Right cardiac atrium (tissue), 5 donors: ENCODE measurements at regions of chr11 and their contacts with region 1.

Region 1: DNA sequence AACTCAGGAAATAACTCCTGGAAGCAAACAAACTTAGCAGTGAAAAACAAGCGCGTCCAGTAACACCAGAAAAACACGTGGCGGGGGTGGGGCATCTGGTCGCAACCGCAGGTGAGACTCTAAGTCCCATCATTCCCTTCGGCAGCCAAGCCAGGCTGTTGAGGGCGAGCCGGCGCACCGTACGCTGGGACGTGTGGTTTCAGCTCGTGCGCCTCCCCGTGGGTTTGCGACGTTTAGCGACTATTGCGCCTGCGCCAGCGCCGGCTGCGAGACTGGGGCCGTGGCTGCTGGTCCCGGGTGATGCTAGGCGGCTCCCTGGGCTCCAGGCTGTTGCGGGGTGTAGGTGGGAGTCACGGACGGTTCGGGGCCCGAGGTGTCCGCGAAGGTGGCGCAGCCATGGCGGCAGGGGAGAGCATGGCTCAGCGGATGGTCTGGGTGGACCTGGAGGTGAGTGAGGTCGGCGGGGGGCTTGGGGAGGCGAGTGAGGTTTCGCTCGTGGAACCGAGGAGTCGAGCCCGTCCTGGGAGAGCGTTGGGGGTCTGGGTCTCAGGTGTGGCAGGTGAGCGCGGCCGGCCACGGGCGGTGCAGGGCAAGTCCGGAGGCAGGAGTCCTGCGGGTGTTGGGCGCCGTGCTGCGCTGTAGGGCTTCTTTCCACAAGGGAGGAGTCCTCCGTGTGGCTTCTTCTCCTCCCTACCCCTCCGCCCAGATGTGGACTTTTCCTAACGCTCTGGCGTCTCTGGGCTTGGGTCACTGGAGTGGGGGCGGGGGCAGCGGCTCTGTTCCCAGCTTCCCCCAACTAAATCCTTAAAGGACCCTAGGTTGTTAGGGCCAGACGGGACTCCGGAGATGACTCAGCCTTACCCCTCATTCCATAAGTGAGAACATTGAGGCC is at the start of gene REXO2:
- DNase-seq: peak; percentile 97 to 99 (median 98)
- ATAC-seq: peak; percentile 99
- H3K4me3 ChIP-seq: peak within 1 kb of the TSS; percentile 81
- H3K27ac ChIP-seq: peak within 1 kb of the TSS; percentile 79
- H3K4me1 ChIP-seq: no peaks in the 10 kb centered on the region
- H3K27me3 ChIP-seq: no peaks in the 10 kb centered on the region
- total RNA-seq, gene REXO2: 119 to 131 (median 122) TPM

Region 2: DNA sequence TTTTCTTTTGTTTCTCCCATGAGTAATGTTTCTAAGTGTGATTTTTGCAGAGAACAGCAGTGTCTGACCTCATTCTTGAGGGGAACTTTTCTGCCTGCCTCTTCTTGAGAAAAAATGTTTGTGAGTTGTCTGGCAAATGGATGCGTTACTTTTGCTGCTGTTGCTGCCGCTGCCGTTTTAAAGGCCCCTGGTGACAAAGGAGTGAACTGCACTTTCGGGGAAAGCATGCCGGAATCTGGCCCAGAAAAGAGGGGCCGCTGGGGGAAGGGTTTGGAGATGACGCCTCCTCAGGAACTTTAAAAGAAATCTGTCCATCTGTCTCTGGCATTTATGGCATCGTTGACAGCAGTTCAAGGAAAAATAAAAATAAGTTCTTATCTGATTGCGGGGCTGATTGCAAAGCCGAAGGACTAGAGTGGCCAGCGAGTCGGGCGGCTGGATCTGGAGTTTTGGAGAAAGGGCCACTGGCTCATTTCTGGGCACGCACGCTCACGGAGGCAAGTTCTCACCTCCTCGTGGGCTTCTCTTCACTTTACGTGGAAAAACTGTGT is 363.5 kb before region 1 on chr11:
- intact Hi-C with region 1: no loop called
- DNase-seq: peak; percentile 60 to 80 (median 71)
- ATAC-seq: no peak
- H3K4me3 ChIP-seq: no peak overlapping the region
- H3K27ac ChIP-seq: peak overlapping the region; percentile 66
- H3K4me1 ChIP-seq: peaks cover 58% of the 10 kb centered on the region
- H3K27me3 ChIP-seq: no peaks in the 10 kb centered on the region

Region 3: DNA sequence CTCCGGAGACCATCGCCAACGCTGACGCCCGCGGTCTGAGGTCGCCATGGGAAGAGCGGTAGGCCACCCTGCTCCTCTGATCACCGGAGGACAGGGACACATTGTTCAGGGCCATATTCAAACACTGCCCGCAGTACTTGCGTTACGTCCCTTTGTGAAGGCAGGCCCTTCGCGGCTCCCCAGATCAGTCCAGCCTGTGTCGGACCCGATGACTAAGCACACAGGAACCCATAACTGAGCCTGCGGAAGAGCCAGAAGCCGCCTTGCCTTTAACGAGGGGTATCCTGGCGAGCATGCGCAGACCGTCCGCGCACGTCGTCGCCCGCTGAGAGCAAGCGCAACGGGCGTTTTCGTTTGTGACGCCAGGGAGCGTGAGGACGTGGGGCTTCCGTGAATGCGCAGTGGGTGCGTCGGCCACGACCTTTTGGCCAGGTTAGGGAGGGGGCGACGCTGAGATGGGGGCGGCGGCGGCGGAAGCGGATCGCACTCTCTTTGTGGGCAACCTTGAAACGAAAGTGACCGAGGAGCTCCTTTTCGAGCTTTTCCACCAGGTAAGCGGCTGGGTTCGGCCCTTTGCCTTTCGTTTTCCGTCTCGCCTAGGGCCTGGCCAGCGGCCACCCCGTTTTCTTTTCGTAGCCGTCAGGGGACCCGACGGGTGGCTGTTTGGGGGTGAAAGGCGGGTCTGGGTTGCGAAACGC is 39.1 kb before region 1 on chr11 and contains the starts of genes C11orf71 and RBM7:
- intact Hi-C with region 1: loop called in 1 of 4 experiments (anchors 5 kb)
- DNase-seq: peak; percentile 99 to 100 (median 100)
- ATAC-seq: peak; percentile 99
- H3K4me3 ChIP-seq: peak within 1 kb of the TSS; percentile 98
- H3K27ac ChIP-seq: peak within 1 kb of the TSS; percentile 96
- H3K4me1 ChIP-seq: peaks cover 1% of the 10 kb centered on the region
- H3K27me3 ChIP-seq: no peaks in the 10 kb centered on the region
- total RNA-seq, gene C11orf71: 6.7 to 13.6 (median 8.5) TPM
- total RNA-seq, gene RBM7: 20.5 to 24.5 (median 22.2) TPM